Left ventricle myocardium inferior (tissue), 1 donor: ENCODE measurements at regions of chr17 and their contacts with region 1.

Region 1: GRCh38 chr17:67689534-67690177 is 28.1 kb upstream of the NOL11 start:
- DNase-seq: no peak
- H3K4me3 ChIP-seq: no peak overlapping the region
- H3K27ac ChIP-seq: no peak overlapping the region
- H3K4me1 ChIP-seq: peaks cover 9% of the 10 kb centered on the region
- H3K27me3 ChIP-seq: no peaks in the 10 kb centered on the region
- CTCF ChIP-seq: peak; percentile 87

Region 2: GRCh38 chr17:67376737-67377487 is 312.7 kb before region 1 on chr17 and contains the start of gene PITPNC1:
- intact Hi-C with region 1: loop called (anchors 5 kb)
- DNase-seq: peak; percentile 88
- H3K4me3 ChIP-seq: peak within 1 kb of the TSS; percentile 80
- H3K27ac ChIP-seq: peak within 1 kb of the TSS; percentile 96
- H3K4me1 ChIP-seq: peaks cover 58% of the 10 kb centered on the region
- H3K27me3 ChIP-seq: no peaks in the 10 kb centered on the region
- CTCF ChIP-seq: no peak
- total RNA-seq, gene PITPNC1: 8.1 TPM